Tibial artery (tissue), 4 donors: ENCODE measurements at regions of chr2 and their contacts with region 1.

Region 1: GRCh38 chr2:11697103-11697871 is 27.3 kb upstream of the NTSR2 start:
- DNase-seq: peak; percentile 51 to 83
- H3K4me3 ChIP-seq: no peak overlapping the region
- H3K27ac ChIP-seq: peak overlapping the region; percentile 32 to 55
- H3K4me1 ChIP-seq: peaks cover 0 to 31% (median 19%) of the 10 kb centered on the region in 4 donors
- H3K27me3 ChIP-seq: no peaks in the 10 kb centered on the region
- CTCF ChIP-seq: no peak

Region 2: DNA sequence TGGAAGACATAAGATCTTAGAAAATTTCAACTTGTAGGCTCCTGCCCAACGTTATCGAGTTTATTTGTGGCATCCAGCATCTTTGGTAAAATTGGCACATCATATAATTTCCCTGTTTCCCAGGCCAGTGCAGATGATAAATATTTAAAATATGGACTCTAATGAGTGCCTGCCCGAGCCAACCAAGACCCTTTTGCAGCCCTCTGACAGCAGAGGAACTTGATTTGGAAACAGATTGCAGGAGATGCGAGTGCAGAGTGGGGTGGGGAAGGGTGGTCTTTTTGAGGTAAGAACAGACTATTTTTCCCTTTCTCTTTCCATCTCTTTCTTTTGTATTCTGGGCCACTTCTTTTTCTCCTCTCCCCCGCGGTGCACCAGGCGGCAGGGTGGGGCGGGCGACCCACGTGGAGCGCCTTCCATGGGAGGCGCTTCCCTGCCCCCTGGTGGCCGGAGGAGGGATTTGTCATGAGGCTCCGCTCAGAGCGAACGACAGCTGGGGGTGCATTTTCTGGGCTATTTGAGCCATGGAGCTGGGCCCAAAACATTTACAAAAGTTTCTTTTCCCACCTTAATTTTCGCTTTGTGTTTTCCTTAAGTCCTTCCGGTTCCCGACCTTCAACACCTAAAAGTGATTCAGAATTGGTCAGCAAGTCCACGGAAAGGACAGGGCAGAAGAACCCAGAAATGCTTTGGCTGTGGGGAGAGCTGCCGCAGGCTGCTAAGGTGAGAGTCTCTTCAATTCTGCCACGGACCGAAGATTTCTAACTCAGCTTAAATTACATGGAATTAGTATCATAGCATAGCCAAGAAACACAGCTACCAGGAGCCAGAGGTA is 81.9 kb after region 1 on chr2:
- intact Hi-C with region 1: loop called (anchors 5 kb)
- DNase-seq: peak; percentile 68 to 81
- H3K4me3 ChIP-seq: no peak overlapping the region
- H3K27ac ChIP-seq: no peak overlapping the region
- H3K4me1 ChIP-seq: peaks cover 0 to 6% (median 3%) of the 10 kb centered on the region in 4 donors
- H3K27me3 ChIP-seq: no peaks in the 10 kb centered on the region
- CTCF ChIP-seq: peak; percentile 96 to 97

Region 3: DNA sequence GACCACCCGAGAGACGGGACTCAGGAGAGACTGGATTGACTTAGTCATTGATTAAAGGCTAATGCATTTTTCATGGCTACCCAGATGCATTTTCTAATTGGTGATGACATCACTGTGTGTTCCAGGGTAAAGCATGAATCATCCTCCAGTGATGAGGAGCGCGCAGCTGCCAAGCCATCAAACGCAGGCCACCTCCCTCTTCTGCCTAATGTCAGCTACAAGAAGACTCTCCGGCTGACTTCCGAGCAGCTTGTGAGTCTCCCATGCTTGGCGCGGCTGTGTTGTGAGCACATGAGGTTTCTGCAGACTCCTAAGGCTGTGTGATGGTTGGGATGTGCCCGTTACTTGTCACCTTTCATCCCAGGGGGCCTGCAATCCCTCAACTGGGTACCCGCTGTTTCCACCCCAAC is 105.5 kb after region 1 on chr2:
- intact Hi-C with region 1: no loop called
- DNase-seq: no peak
- H3K4me3 ChIP-seq: no peak overlapping the region
- H3K27ac ChIP-seq: no peak overlapping the region
- H3K4me1 ChIP-seq: no peaks in the 10 kb centered on the region
- H3K27me3 ChIP-seq: no peaks in the 10 kb centered on the region
- CTCF ChIP-seq: no peak

Region 4: DNA sequence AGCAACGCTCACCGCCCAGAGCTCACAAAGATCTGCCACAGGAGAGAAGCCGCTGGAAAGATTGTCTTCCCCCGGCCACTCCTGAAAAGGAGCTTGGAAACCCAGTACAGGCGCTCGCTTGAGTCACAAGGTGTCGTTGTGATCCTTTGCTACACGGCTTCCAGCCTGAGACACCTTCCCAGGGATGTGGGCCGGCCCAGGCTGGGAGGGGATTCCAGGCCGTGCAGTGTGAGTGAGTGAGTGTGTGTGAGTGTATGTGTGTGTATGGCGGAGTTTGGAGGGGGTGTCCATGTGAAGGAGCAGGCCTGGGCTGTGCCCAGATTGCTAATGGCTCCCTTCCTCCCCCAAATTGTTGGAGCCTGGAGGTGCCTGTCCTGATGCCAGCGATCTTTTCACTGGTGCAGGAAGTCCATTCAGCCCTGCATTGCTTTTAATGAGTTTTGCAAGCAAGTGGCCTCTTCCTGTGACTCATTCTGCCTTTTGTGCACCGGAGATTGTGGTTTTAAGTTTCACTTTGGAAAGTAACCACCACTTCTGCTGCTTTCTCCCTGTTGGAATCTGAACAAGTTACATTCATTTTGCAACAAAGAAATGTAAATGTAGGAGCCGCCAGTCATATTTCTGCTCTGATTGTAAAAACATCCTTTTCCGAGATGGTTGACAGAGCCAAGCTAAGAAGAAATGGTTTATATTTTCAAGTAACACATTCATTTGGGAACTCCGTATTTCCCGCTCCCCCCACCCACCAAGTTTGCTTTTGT is 132.8 kb after region 1 on chr2:
- intact Hi-C with region 1: no loop called
- DNase-seq: peak; percentile 62 to 81
- H3K4me3 ChIP-seq: peak overlapping the region; percentile 22 to 46
- H3K27ac ChIP-seq: peak overlapping the region; percentile 46 to 62
- H3K4me1 ChIP-seq: peaks cover 0 to 24% (median 13%) of the 10 kb centered on the region in 4 donors
- H3K27me3 ChIP-seq: no peaks in the 10 kb centered on the region
- CTCF ChIP-seq: peak in 1 of 2 experiments; percentile 4